ENCODE measurements at regions of chr4 and their contacts with region 1.

Region 1: DNA sequence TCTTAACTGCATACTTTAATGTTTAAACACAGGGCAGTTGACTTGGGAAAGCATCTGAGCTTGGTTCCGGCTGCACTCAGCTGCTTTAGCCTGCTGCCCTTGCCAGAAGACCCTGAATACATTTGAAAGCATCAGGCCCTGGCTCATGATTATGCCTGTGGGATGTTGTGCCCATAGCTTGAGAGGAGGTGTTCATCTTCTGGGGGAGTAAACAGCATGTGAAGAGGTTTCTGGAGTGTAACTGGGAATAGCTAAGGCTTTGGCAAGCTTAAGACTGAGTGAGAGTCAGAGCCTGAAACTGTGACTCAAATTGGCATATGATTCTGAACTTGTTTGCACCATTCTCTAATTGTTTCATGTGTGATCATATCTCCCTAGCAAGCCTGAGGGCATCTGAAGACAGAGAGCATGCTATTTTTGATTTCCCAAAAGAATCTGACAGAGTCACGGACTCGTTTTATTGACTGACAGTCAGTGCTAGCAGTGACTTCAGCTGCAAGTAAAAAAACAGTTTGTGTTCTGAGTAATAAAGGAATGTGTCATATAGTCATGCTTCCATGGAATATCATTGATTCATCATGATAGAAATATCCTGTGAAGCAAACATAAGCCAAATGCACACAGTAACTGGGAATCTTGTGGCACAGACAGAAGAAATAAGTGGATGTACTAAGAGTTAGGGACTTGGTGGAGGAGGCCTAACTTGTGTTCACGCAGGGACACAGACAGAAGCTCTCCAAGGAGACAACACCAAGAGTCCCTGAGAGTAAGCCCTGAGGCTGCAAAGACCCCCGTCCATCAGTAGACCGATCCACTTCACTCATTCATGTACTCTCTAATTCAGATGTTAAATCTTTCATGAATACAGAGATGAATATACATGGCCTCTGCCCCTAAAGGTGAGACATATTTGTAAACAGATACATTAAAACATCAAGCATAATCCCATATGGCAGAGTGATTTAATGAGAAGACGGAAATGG is 100.7 kb downstream of the SYNPO2 start:
- DNase-seq: no peak
- H3K4me3 ChIP-seq: no peak overlapping the region
- H3K27ac ChIP-seq: peak overlapping the region; percentile 53
- H3K4me1 ChIP-seq: no peaks in the 10 kb centered on the region
- H3K27me3 ChIP-seq: no peaks in the 10 kb centered on the region
- CTCF ChIP-seq: no peak

Region 2: DNA sequence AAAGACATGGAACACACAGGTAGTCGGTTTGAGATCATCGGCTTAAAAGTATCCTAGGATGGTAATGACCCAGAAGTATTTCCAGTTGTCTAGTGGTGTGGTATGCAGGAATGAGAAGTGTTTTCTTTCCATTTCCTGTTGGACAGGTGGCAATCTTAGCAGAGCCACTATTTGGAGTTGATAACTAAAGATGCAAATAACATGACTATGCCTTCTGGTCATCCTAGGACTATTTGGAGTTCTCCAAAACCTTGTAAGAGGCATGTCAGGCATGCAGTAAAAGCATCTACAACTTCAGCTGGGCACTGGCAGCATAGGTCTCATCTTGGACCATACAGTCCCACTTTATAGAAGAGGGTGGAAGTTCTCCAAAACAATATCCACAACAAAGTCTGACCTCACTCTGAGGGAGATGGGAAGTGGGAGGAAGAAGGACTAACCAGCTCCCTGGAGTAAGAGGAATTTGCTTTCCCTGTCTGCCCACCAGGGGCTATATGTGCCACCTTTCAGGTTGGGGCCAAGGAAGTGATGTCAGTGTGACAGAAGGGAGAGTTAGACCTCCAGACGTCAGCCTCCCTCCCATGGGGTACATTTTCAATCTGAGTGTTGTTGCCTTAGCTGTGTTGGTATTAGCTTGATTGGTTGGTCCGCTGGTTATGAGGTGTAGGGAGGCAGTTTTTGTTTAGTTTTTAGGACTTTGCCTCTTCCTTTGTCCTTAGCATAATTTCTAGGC is 45.1 kb after region 1 on chr4:
- intact Hi-C with region 1: loop called (anchors 5 kb)
- DNase-seq: no peak
- H3K4me3 ChIP-seq: no peak overlapping the region
- H3K27ac ChIP-seq: no peak overlapping the region
- H3K4me1 ChIP-seq: no peaks in the 10 kb centered on the region
- H3K27me3 ChIP-seq: no peaks in the 10 kb centered on the region
- CTCF ChIP-seq: no peak

Measured in colonic mucosa (tissue), 4 donors.